A549 (cell line): ENCODE measurements at regions of chr19 and their contacts with region 1.

Region 1: GRCh38 chr19:42396381-42397262 is 6.5 kb upstream of the CNFN start:
- DNase-seq: peak; percentile 100
- ATAC-seq: peak; percentile 86 to 97
- H3K4me3 ChIP-seq: peak overlapping the region; percentile 62
- H3K27ac ChIP-seq: peak overlapping the region; percentile 79 to 87
- H3K4me1 ChIP-seq: peaks cover 20% of the 10 kb centered on the region
- CTCF ChIP-seq: no peak
- EP300 ChIP-seq: no peak
- POLR2A ChIP-seq: peak; percentile 93
- RAD21 ChIP-seq: no peak

Region 2: GRCh38 chr19:42378225-42379215 is 18.1 kb before region 1 on chr19:
- CTCF ChIA-PET with region 1: interaction called, 288 read pairs
- POLR2A ChIA-PET with region 1: interaction called, 16 read pairs
- DNase-seq: no peak
- ATAC-seq: peak in 1 of 2 experiments; percentile 17; a peak in 3 of 6 replicates
- H3K4me3 ChIP-seq: no peak overlapping the region
- H3K27ac ChIP-seq: no peak overlapping the region
- H3K4me1 ChIP-seq: no peaks in the 10 kb centered on the region
- CTCF ChIP-seq: no peak
- EP300 ChIP-seq: no peak
- POLR2A ChIP-seq: no peak
- RAD21 ChIP-seq: no peak

Region 3: GRCh38 chr19:42412227-42412626 is 15.6 kb after region 1 on chr19:
- CTCF ChIA-PET with region 1: interaction called, 302 read pairs
- POLR2A ChIA-PET with region 1: interaction called, 8 read pairs
- DNase-seq: no peak
- ATAC-seq: peak; percentile 12; a peak in 4 of 6 replicates
- H3K4me3 ChIP-seq: no peak overlapping the region
- H3K27ac ChIP-seq: no peak overlapping the region
- H3K4me1 ChIP-seq: no peaks in the 10 kb centered on the region
- CTCF ChIP-seq: no peak
- EP300 ChIP-seq: no peak
- POLR2A ChIP-seq: no peak
- RAD21 ChIP-seq: no peak

Region 4: GRCh38 chr19:42423462-42424344 is 27.1 kb after region 1 on chr19:
- CTCF ChIA-PET with region 1: interaction called, 302 read pairs
- POLR2A ChIA-PET with region 1: interaction called, 6 read pairs
- DNase-seq: peak; percentile 94 to 100
- ATAC-seq: peak; percentile 80 to 96
- H3K4me3 ChIP-seq: peak overlapping the region; percentile 48
- H3K27ac ChIP-seq: peak overlapping the region; percentile 52 to 78
- H3K4me1 ChIP-seq: peaks cover 18% of the 10 kb centered on the region
- CTCF ChIP-seq: no peak
- EP300 ChIP-seq: no peak
- POLR2A ChIP-seq: no peak
- RAD21 ChIP-seq: no peak

Region 5: DNA sequence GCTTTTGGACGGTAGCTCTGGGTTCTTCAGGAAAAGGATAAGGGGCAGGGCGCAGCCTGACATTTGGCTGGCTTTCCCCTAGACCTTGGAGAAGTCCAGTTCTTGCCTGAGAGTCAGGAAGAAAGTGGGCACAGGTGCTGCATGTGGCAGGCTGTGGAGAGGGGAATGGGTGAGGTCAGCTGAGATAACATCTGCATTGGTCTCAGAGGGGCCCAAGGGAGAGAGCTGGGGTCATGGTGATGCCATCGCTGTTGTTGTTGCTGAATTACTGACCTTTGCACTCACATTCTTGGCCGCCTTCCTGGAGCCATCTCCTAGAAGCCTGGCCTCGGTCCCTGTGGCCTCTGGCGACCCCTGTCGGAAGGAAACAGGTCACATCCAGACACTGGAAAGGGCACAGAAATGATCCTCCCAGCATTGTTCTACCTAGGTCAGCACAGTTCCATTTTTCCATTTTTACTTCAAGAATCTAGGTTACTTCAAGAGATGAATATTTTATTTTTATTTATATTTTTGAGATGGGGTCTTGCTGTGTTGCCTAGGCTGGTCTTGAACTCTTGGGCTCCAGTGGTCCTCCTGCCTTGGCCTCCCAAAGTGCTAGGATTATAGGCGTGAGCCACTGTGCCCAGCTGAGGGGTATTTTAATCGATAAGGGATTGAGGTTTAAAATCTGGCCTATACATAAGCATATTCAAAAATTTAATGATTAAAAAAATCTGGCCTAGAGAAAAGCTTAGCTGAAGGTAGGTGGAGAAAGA is 37.1 kb after region 1 on chr19:
- CTCF ChIA-PET with region 1: interaction called, 23 read pairs
- POLR2A ChIA-PET with region 1: no interaction called
- DNase-seq: peak; percentile 90 to 91
- ATAC-seq: peak; percentile 91 to 96
- H3K4me3 ChIP-seq: no peak overlapping the region
- H3K27ac ChIP-seq: peak overlapping the region; percentile 58 to 75
- H3K4me1 ChIP-seq: peaks cover 21% of the 10 kb centered on the region
- CTCF ChIP-seq: peak; percentile 99
- EP300 ChIP-seq: no peak
- POLR2A ChIP-seq: no peak
- RAD21 ChIP-seq: peak; percentile 92 to 98